ENCODE measurements at regions of chr22 and their contacts with region 1.

Region 1: DNA sequence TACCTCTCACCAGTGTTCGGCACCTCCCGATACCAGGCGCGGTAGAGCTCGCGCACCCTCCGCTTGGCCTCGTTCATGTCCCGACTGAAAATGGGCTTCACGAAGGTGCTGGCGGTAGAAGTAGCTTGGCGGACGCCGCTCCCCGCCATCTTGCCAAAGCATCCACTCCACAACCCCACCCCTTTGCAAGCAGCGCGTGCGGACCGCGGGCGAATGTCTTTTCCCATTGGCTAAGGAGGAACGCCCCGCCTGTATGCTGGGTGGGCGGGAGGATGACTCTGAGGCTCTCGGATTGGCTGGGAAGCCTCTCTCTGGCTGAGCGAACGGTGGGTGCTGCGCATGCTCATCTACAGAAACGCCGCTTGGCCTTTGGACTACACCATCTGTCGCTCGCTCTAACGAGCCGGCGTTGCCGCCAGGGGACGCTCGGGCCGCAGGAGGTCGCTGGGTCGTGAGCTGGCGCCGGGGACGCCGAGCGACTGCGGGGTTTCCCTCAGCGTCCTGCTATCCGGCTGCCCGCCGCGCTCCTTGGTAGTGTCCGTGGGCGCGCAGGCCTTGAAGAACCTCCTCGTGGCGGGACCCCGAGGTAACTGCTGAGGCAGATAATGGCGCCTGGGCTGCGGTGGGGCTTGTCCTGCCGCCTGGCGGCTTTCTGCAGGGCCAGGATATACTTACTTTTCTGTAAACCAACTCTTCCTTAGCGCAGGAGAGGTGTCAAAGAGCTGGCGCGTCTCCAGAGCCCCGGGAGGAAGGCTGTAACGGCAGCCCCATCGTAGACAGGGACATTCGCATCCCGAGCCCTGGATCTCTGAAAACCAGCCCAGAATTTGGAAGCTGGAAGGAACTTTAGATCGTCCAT is at the start of gene NDUFA6:
- DNase-seq: peak; percentile 100
- ATAC-seq: peak; percentile 98
- H3K4me3 Mint-ChIP-seq: peak within 1 kb of the TSS; percentile 85
- H3K27ac Mint-ChIP-seq: peak within 1 kb of the TSS; percentile 99
- H3K4me1 Mint-ChIP-seq: peaks cover 30% of the 10 kb centered on the region
- H3K27me3 Mint-ChIP-seq: no peaks in the 10 kb centered on the region
- total RNA-seq, gene NDUFA6: 75.9 to 91.6 TPM

Region 2: DNA sequence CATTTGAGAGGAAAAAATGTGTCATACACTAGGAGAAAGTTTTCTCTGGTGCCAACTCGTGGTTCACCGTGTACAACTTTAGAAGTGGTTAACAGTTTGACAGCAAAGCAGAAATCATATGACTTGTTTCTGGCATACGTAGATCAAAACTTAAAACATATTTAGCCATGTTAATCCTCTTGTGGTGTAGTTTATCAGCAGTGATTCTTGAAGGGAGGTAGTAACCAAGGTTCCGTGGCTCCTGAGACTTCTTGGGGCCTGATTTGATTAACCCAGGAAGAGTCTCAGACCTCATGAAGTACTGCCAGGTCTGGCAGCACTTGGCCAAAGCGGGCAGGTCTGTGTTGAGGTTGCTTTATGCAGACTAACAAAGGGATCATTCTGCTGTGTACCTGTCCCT is 217.4 kb before region 1 on chr22:
- CTCF ChIA-PET with region 1: no interaction called
- DNase-seq: no peak
- ATAC-seq: peak; percentile 45
- H3K4me3 Mint-ChIP-seq: no peak overlapping the region
- H3K27ac Mint-ChIP-seq: peak overlapping the region; percentile 10
- H3K4me1 Mint-ChIP-seq: peaks cover 14% of the 10 kb centered on the region
- H3K27me3 Mint-ChIP-seq: no peaks in the 10 kb centered on the region

Region 3: GRCh38 chr22:41966607-41967240 is 124.1 kb before region 1 on chr22:
- CTCF ChIA-PET with region 1: interaction called, 33 read pairs
- DNase-seq: peak; percentile 68
- ATAC-seq: peak; percentile 81
- H3K4me3 Mint-ChIP-seq: no peak overlapping the region
- H3K27ac Mint-ChIP-seq: no peak overlapping the region
- H3K4me1 Mint-ChIP-seq: peaks cover 3% of the 10 kb centered on the region
- H3K27me3 Mint-ChIP-seq: peaks cover 3% of the 10 kb centered on the region

Region 4: DNA sequence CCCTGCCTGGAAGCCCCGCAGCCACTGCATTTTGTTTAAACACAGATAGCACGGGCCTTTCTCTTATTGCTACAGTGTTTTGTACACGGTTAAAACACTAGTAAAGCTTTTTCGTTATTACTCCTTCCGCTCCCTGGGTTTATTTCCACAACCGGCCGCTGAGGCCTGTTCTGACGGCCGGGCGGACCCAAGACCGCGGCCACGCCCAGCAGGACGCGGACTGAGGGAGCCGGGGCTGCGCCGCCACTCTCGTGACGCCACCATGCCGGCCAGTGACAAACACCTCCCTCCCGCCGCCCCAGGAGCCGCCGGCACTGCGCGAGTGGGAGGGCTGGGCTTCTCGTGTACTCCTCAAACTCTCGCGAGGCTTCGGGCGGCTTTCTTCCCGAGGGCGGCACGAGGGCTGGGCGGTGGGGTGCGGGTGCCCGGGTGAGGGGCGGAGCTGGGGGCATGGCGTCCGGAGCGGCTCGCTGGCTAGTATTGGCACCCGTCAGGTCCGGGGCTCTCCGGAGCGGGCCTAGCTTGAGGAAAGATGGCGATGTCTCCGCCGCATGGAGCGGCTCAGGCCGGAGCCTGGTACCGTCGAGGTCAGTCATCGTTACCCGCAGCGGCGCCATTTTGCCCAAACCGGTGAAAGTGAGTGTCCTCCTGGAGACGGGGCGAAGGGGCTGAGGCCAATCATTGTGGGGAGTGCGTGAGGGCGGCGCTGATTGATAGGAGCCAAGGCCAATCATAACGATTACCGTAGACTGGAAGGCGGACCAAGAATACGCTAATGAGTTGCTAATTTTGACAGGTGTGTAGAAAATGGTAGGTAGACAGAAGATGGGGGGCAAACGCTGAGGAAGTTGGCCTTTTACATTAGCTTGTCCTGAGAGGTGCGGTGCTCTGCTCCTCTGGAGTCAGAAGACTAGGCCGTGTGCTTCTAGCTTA is 11.2 kb before region 1 on chr22 and contains the start of gene SMDT1:
- CTCF ChIA-PET with region 1: interaction called, 56 read pairs
- DNase-seq: peak; percentile 99
- ATAC-seq: peak; percentile 91
- H3K4me3 Mint-ChIP-seq: peak within 1 kb of the TSS; percentile 87
- H3K27ac Mint-ChIP-seq: peak within 1 kb of the TSS; percentile 96
- H3K4me1 Mint-ChIP-seq: peaks cover 32% of the 10 kb centered on the region
- H3K27me3 Mint-ChIP-seq: no peaks in the 10 kb centered on the region
- total RNA-seq, gene SMDT1: 60.4 to 72.1 TPM

Region 5: DNA sequence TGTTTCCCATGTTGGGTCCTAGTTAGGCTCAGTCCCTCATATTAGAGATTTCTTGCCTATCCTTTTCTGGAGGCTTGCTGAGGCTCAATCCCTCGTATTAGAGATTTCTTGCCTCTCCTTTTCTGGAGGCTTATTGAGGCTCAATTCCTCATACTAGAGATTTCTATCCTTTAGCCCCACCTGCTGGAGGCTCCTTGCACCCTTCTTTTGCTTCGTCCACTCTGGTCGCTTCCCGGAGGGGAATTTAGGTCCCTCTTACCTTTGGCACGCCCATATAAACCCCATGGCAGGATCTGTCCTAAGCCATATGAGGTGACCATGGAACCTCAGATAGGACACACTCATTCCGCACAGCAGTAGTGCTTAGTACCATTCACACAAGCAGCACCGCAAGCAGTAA is 23.9 kb after region 1 on chr22:
- CTCF ChIA-PET with region 1: interaction called, 15 read pairs
- DNase-seq: no peak
- ATAC-seq: no peak
- H3K4me3 Mint-ChIP-seq: no peak overlapping the region
- H3K27ac Mint-ChIP-seq: no peak overlapping the region
- H3K4me1 Mint-ChIP-seq: peaks cover 9% of the 10 kb centered on the region
- H3K27me3 Mint-ChIP-seq: no peaks in the 10 kb centered on the region

Region 6: GRCh38 chr22:42437488-42438292 is 346.9 kb after region 1 on chr22:
- CTCF ChIA-PET with region 1: interaction called, 41 read pairs
- DNase-seq: peak; percentile 88
- ATAC-seq: peak; percentile 94
- H3K4me3 Mint-ChIP-seq: peak overlapping the region; percentile 72
- H3K27ac Mint-ChIP-seq: peak overlapping the region; percentile 74
- H3K4me1 Mint-ChIP-seq: peaks cover 26% of the 10 kb centered on the region
- H3K27me3 Mint-ChIP-seq: peaks cover 14% of the 10 kb centered on the region

Region 7: DNA sequence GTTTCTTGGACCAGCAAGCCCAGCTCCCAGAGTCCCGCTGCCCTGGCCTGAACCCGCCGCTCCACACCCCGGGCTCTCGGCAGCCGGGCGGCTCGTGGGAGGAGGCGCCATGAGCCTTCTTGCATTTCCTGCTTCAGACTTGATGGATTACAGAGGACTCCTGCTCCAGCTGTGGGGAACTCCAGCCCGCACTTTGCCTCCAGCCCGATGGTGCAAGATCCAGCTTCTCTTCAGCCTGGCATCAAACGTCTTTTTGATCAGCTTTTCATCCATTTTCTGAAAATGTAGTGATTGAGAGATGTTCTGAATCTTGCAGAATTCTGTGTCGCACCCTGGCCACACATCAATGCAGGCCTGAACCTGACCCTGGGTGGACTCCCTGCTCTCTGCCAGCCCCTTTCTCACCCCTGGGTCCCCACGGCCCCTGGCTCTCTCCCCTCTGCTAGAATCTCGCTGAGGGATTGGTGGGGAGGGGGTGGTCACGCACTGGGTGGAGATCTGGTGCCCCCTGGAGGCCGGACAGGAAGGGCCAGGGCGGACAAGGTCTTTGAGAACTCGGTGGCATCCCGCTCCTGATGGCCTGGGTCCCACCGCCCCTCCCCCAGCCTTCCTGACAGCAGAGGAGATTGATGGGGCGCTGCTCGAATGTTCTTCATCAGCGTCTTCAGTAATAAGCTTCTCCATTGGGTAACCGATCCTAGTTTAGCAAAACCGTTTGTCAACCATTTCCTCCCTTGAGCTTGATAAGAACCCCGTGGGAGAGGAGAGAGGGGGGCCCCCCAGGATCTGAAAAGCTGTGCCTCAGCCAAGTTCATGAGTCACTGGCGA is 353.5 kb after region 1 on chr22:
- CTCF ChIA-PET with region 1: interaction called, 41 read pairs
- DNase-seq: peak; percentile 85
- ATAC-seq: peak; percentile 79
- H3K4me3 Mint-ChIP-seq: peak overlapping the region; percentile 44
- H3K27ac Mint-ChIP-seq: peak overlapping the region; percentile 78
- H3K4me1 Mint-ChIP-seq: peaks cover 25% of the 10 kb centered on the region
- H3K27me3 Mint-ChIP-seq: peaks cover 3% of the 10 kb centered on the region